Prostate gland (tissue), 2 donors: ENCODE measurements at regions of chr5 and their contacts with region 1.

Region 1: GRCh38 chr5:180868960-180869359 is 7.9 kb upstream of the ZFP62 start:
- DNase-seq: peak; percentile 91
- H3K4me3 ChIP-seq: no peak overlapping the region
- H3K27ac ChIP-seq: peak overlapping the region; percentile 80 to 81
- H3K4me1 ChIP-seq: peaks cover 7% of the 10 kb centered on the region
- H3K27me3 ChIP-seq: no peaks in the 10 kb centered on the region
- CTCF ChIP-seq: peak; percentile 55 to 91 (median 84)
- POLR2A ChIP-seq: no peak

Region 2: GRCh38 chr5:180844432-180844831 is 24.5 kb before region 1 on chr5:
- intact Hi-C with region 1: no loop called
- DNase-seq: no peak
- H3K4me3 ChIP-seq: no peak overlapping the region
- H3K27ac ChIP-seq: no peak overlapping the region
- H3K4me1 ChIP-seq: no peaks in the 10 kb centered on the region
- H3K27me3 ChIP-seq: no peaks in the 10 kb centered on the region
- CTCF ChIP-seq: no peak
- POLR2A ChIP-seq: no peak

Region 3: DNA sequence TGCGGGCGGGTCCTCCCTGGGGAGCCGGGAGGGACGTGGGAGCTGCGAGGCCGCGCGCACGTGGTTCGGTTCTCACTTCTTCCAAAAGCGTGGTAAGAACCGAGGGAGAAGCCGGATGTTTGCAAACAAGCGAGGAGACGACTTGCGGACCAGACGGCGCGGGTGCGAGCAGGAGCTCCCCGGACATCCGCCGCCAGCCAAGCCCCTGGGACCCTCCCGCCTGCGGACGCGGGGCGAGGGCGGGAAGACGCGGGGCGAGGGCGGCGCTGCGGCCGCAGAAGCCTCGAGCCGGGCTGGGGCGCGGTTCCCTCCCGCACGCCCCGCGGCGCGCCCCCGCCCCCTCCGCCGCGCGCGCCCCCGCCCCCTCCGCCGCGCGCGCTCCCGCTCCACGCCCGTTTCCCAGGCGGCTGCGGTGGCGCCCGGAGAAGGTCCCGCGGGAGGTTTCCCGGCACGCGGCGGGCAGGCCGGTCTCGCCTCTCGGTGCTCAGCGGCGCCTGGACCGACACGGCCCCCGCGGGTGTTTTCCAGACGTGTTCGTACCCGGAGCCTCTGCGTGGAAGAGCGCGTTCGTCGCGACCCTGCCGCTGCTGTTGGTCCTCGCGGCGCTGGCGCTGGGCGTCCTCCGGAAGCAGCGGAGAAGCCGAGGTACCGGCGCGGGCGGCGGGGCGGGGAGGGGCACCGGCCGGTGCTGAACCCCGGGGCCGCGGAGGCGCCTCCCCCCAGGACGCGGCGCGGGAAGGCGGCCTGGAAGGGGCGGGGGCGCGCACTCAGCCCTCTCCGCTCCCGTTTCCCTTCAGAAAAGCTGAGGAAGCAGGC is 183.9 kb after region 1 on chr5:
- intact Hi-C with region 1: no loop called
- DNase-seq: no peak
- H3K4me3 ChIP-seq: peak overlapping the region; percentile 41 to 44
- H3K27ac ChIP-seq: no peak overlapping the region
- H3K4me1 ChIP-seq: peaks cover 9% of the 10 kb centered on the region
- H3K27me3 ChIP-seq: peaks cover 21% of the 10 kb centered on the region
- CTCF ChIP-seq: no peak
- POLR2A ChIP-seq: no peak

Region 4: GRCh38 chr5:181159830-181160754 is 291.1 kb after region 1 on chr5:
- intact Hi-C with region 1: loop called (anchors 5 kb)
- DNase-seq: no peak
- H3K4me3 ChIP-seq: no peak overlapping the region
- H3K27ac ChIP-seq: no peak overlapping the region
- H3K4me1 ChIP-seq: no peaks in the 10 kb centered on the region
- H3K27me3 ChIP-seq: no peaks in the 10 kb centered on the region
- CTCF ChIP-seq: no peak
- POLR2A ChIP-seq: no peak